Naive thymus-derived CD4-positive, alpha-beta T cell (primary cell): ENCODE measurements at regions of chr18 and their contacts with region 1.

Region 1: GRCh38 chr18:55781481-55781957 is 193.5 kb upstream of the TCF4 start:
- DNase-seq: no peak
- ATAC-seq: no peak
- H3K4me3 ChIP-seq: no peak overlapping the region
- H3K4me3 Mint-ChIP-seq: peak overlapping the region in 2 of 10 donors; percentile 32 to 36
- H3K27ac ChIP-seq: no peak overlapping the region
- H3K27ac Mint-ChIP-seq: no peak overlapping the region
- H3K4me1 ChIP-seq: no peaks in the 10 kb centered on the region
- H3K4me1 Mint-ChIP-seq: peaks cover 0 to 19% (median 10%) of the 10 kb centered on the region in 7 donors
- H3K27me3 ChIP-seq: no peaks in the 10 kb centered on the region
- H3K27me3 Mint-ChIP-seq: peaks cover 36 to 58% (median 51%) of the 10 kb centered on the region in 5 donors

Region 2: DNA sequence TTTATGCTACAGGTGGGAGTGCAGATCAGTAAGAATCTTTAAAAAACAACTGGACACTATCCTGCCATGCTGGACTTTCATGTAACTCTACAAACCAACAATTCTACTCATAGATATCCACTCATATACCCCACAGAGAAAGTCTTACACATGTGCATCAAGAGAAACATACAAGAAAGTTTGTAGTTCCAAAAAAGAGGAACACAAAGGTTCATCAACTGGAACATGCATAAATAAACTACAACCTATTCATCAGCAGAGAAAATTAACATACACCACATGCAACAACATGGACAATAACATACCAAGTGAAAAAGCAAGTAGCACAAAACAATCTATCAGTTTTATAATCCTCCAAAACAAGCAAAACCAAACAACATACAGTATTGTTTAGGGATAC is 210.6 kb before region 1 on chr18:
- CTCF ChIA-PET with region 1: no interaction called
- POLR2A ChIA-PET with region 1: no interaction called
- intact Hi-C with region 1: no loop called
- DNase-seq: no peak
- ATAC-seq: no peak
- H3K4me3 ChIP-seq: no peak overlapping the region
- H3K4me3 Mint-ChIP-seq: no peak overlapping the region
- H3K27ac ChIP-seq: no peak overlapping the region
- H3K27ac Mint-ChIP-seq: no peak overlapping the region
- H3K4me1 ChIP-seq: no peaks in the 10 kb centered on the region
- H3K4me1 Mint-ChIP-seq: no peaks in the 10 kb centered on the region
- H3K27me3 ChIP-seq: no peaks in the 10 kb centered on the region
- H3K27me3 Mint-ChIP-seq: peaks cover 0 to 5% (median 0%) of the 10 kb centered on the region in 5 donors

Region 3: GRCh38 chr18:55844382-55844781 is 62.9 kb after region 1 on chr18:
- CTCF ChIA-PET with region 1: no interaction called
- POLR2A ChIA-PET with region 1: no interaction called
- intact Hi-C with region 1: loop called in 1 of 2 experiments (anchors 10 kb)
- DNase-seq: no peak
- ATAC-seq: no peak
- H3K4me3 ChIP-seq: no peak overlapping the region
- H3K4me3 Mint-ChIP-seq: no peak overlapping the region
- H3K27ac ChIP-seq: no peak overlapping the region
- H3K27ac Mint-ChIP-seq: no peak overlapping the region
- H3K4me1 ChIP-seq: no peaks in the 10 kb centered on the region
- H3K4me1 Mint-ChIP-seq: no peaks in the 10 kb centered on the region
- H3K27me3 ChIP-seq: no peaks in the 10 kb centered on the region
- H3K27me3 Mint-ChIP-seq: no peaks in the 10 kb centered on the region